ENCODE measurements at regions of chr3 and their contacts with region 1.

Region 1: GRCh38 chr3:19190602-19191001 is 42.3 kb downstream of the KCNH8 start:
- DNase-seq: no peak
- H3K4me3 Mint-ChIP-seq: no peak overlapping the region
- H3K27ac Mint-ChIP-seq: no peak overlapping the region
- H3K4me1 Mint-ChIP-seq: peaks cover 4% of the 10 kb centered on the region
- H3K27me3 Mint-ChIP-seq: no peaks in the 10 kb centered on the region

Region 2: GRCh38 chr3:18847583-18848197 is 342.9 kb before region 1 on chr3:
- CTCF ChIA-PET with region 1: no interaction called
- DNase-seq: no peak
- H3K4me3 Mint-ChIP-seq: no peak overlapping the region
- H3K27ac Mint-ChIP-seq: no peak overlapping the region
- H3K4me1 Mint-ChIP-seq: peaks cover 12% of the 10 kb centered on the region
- H3K27me3 Mint-ChIP-seq: peaks cover 4% of the 10 kb centered on the region

Region 3: GRCh38 chr3:19146685-19147650 is 43.6 kb before region 1 on chr3:
- CTCF ChIA-PET with region 1: interaction called, 10 read pairs
- DNase-seq: peak; percentile 74
- H3K4me3 Mint-ChIP-seq: peak overlapping the region; percentile 89
- H3K27ac Mint-ChIP-seq: peak overlapping the region; percentile 72
- H3K4me1 Mint-ChIP-seq: peaks cover 26% of the 10 kb centered on the region
- H3K27me3 Mint-ChIP-seq: peaks cover 48% of the 10 kb centered on the region

Measured in activated naive CD4-positive, alpha-beta T cell treated with anti-CD3 and anti-CD28 coated beads, Interleukin-2, amount 10 ng/mL, durations not matched to agents 7 days and 5 days (primary cell).